ENCODE measurements at regions of chrX and their contacts with region 1.

Region 1: DNA sequence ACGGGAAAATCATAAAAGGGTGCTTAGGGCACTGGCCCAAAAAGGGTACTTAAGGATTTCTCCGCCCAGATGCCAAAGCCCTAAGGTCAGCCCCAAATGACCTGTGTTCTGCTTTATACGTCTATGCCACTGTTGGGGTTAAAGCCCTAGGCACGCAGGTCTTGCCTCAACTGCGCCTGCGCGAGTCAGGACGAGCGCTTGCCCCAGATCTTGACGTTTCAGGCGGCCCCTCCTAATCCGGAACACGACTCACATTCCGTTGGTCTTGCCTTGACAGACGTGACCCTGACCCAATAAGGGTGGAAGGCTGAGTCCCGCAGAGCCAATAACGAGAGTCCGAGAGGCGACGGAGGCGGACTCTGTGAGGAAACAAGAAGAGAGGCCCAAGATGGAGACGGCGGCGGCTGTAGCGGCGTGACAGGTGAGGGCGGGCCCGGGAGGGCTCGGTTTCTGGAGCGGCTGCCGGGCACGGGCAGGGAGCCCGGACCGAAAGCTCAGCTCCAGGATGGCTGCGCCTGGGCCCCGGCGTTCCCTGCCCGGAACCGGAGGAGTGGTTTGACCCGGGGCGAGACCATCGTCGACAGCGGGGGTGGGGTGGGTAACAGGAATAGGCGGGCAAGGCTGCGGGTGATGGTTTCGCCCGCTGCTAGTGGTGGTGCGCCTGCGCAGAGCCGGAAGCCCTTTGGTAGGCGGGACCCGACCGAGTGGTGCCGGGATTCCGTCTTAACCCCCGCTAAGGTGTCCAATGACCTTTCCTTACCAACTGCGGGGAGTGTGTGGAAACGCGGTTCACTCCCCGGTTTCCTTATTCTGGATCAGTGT is at the start of gene ARAF:
- DNase-seq: peak; percentile 97
- ATAC-seq: peak; percentile 96 to 97
- H3K4me3 ChIP-seq: peak within 1 kb of the TSS; percentile 87
- H3K27ac ChIP-seq: peak within 1 kb of the TSS; percentile 98
- H3K4me1 ChIP-seq: peaks cover 3% of the 10 kb centered on the region
- H3K27me3 ChIP-seq: no peaks in the 10 kb centered on the region
- total RNA-seq, gene ARAF: 65.9 to 73.2 (median 69.2) TPM

Region 2: DNA sequence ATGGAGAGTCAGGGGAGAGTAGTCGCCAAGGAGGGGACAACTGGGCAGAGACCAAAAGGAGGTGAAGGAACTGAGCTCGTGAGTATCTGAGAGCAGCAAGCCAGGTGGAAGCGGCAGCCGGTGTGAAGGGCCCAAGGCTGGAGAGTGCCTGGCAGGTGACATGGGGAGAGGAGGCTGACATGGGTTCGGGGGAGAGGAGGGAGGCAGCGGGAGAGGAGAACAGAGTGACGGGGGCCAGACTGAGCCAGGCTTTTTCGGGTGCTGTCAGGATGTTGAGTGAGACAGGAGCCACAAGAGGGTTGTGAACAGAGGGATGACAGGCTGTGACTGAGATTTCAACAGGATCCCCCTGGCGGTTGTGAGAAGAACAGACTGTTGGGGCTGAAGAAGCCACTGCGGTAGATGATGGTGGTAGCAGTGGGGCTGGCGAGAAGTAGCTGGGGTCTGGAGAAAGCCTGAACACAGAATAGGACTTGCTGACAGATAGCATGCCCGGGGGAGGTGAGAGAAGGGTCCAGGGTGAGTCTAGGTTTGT is 83.6 kb after region 1 on chrX:
- intact Hi-C with region 1: loop called in 1 of 4 experiments (anchors 5 kb)
- DNase-seq: no peak
- ATAC-seq: peak; percentile 56 to 67
- H3K4me3 ChIP-seq: no peak overlapping the region
- H3K27ac ChIP-seq: no peak overlapping the region
- H3K4me1 ChIP-seq: peaks cover 7% of the 10 kb centered on the region
- H3K27me3 ChIP-seq: no peaks in the 10 kb centered on the region